Aorta (tissue), 5 donors: ENCODE measurements at regions of chr6 and their contacts with region 1.

Region 1: DNA sequence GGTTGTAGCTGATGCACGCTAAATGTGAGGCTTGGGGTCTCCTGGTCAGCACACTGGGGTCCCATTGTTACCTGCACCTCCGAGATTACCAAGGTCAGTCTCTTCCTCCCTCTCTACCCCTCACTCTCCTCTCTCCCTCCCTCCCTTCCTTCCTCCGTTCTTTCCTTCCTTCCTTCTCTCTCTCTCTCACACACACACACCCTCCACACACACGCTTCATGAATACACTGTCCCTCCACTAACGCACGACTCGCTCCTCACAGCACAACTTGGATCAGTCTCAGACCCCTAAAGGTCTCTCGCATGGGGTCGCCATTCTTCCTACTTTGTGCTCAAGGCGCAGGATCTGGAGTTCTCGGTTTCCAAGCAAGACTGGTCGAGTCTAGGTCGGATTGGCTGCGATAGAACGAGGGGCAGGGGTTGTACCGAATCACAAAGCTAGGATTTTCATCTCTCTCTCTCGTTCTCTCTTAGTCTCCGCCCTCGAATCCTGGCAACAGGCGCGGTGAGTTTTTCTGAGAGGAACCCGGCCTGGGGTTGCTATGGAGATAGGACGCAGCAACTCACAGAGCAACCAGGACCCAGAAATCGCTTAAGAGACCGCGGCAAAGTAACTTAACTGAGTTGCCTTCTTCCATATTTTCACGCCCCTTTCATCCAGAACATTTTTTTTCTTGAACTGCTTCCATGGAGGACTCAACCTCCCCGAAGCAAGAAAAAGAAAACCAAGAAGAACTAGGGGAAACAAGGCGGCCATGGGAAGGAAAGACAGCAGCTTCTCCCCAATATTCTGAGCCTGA is at the start of gene RSPH4A:
- DNase-seq: peak; percentile 95 to 96
- ATAC-seq: peak; percentile 97
- H3K4me3 ChIP-seq: peak within 1 kb of the TSS; percentile 47 to 63
- H3K27ac ChIP-seq: no peak within 1 kb of the TSS
- H3K4me1 ChIP-seq: no peaks in the 10 kb centered on the region
- H3K27me3 ChIP-seq: no peaks in the 10 kb centered on the region
- total RNA-seq, gene RSPH4A: 0.48 to 0.68 TPM

Region 2: GRCh38 chr6:116568821-116569755 is 47.0 kb before region 1 on chr6:
- intact Hi-C with region 1: loop called in 1 of 2 experiments (anchors 2 kb)
- DNase-seq: no peak
- ATAC-seq: no peak
- H3K4me3 ChIP-seq: no peak overlapping the region
- H3K27ac ChIP-seq: no peak overlapping the region
- H3K4me1 ChIP-seq: peaks cover 0 to 3% of the 10 kb centered on the region in 2 donors
- H3K27me3 ChIP-seq: no peaks in the 10 kb centered on the region

Region 3: DNA sequence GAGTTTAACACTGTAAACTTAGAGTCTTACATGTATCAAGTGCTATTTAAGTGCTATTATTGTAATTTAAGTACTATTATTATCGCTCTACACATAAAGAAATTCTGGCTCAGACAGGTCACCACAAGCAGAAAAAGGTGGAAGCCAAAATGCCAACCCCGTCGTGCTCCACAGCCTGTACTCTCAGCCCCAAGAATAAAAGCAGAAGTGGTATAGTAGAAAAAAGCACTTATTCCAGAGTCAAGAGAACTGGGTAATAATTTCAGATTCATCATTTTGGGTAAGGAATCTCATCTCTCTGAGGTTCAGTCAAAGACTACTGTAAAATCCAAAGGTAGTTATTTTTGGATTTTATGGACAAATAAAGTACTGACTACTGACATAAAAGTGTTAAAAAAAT is 51.5 kb after region 1 on chr6:
- intact Hi-C with region 1: loop called in 1 of 2 experiments (anchors 5 kb)
- DNase-seq: no peak
- ATAC-seq: no peak
- H3K4me3 ChIP-seq: peak overlapping the region in 1 of 2 donors; percentile 93
- H3K27ac ChIP-seq: no peak overlapping the region
- H3K4me1 ChIP-seq: no peaks in the 10 kb centered on the region
- H3K27me3 ChIP-seq: no peaks in the 10 kb centered on the region